K562 (cell line): ENCODE measurements at regions of chr16 and their contacts with region 1.

Region 1: GRCh38 chr16:74563828-74564263 is 43.1 kb downstream of the GLG1 start:
- DNase-seq: peak; percentile 12 to 86 (median 32)
- ATAC-seq: peak; percentile 91
- H3K4me3 ChIP-seq: no peak overlapping the region
- H3K27ac ChIP-seq: peak overlapping the region; percentile 84; the same call in 2 of the 3 replicates
- H3K4me1 ChIP-seq: peaks cover 18 to 29% of the 10 kb centered on the region in 2 experiments
- H3K27me3 ChIP-seq: no peaks in the 10 kb centered on the region
- CTCF ChIP-seq: no peak; a peak in 1 of 6 replicates
- EP300 ChIP-seq: peak; percentile 76
- POLR2A ChIP-seq: no peak
- RAD21 ChIP-seq: no peak; a peak in 1 of 4 replicates

Region 2: DNA sequence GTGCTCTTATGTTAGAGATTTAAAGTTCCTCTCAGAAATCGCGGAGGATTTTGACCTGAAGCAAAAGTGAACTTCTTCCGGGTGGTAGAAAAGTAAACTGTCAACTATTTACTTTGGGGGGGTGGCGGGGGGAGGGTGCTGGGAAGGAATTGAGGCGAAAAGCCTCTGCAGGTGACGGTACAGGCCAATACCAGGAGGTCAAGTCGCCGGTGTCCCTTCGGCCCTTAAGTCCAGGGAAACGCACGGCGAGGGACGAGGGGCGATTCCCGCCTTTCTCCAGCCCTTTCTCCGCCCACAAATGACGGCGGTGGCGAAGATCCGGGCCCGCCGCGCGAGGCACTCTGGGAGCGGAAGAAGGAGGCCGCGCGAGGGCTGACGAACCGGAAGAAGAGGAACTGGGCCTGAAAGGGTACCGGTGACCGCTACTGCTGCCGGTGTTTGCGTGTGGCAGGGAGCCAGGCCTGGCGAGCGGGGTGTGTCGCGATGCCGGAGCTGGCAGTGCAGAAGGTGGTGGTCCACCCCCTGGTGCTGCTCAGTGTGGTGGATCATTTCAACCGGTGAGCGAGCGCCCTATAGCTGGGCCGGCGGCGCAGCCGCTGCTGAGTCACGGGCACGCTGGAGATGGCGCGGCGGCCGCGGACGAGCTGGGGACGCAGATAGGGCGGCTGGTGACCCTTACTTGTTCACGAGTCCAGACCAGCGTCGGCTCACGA is 267.3 kb before region 1 on chr16 and contains the start of gene PSMD7:
- CTCF ChIA-PET with region 1: no interaction called
- POLR2A ChIA-PET with region 1: no interaction called
- in situ Hi-C with region 1: no loop called
- intact Hi-C with region 1: no loop called
- DNase-seq: peak; percentile 87 to 96 (median 89)
- ATAC-seq: peak; percentile 95
- H3K4me3 ChIP-seq: peak within 1 kb of the TSS; percentile 86
- H3K27ac ChIP-seq: peak within 1 kb of the TSS; percentile 92
- H3K4me1 ChIP-seq: peaks cover 7 to 13% of the 10 kb centered on the region in 2 experiments; a peak in 3 of 5 replicates
- H3K27me3 ChIP-seq: no peaks in the 10 kb centered on the region
- CTCF ChIP-seq: no peak
- EP300 ChIP-seq: peak; percentile 15; the same call in 1 of the 2 replicates
- POLR2A ChIP-seq: peak; percentile 97
- RAD21 ChIP-seq: no peak
- polyA plus RNA-seq, gene PSMD7: 100 to 142 TPM

Region 3: DNA sequence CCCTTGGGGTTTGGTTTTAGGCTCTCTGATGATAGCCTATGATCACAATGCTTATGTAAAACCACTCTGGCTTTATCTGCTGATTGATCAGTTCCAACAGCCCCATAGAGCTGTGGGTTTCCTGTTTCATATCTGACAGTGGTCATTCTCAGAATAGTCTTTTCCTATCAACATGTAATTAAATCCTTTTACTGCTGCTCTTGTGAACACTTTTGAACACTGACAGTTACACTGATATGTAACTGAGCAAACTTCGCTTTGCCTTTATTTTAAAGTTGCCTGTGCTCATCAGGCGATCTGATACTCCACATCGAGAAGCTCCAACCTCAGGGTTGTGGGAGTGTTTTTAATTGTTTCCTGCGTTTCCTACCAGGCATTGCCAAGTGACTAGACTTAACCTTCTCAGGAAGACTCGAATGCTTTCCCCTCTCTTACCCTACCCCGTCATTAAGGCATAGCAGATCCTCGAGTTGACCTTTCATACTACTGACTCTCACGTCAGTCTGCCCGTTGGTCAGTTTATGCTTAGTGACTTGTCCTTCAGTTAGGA is 125.3 kb before region 1 on chr16:
- CTCF ChIA-PET with region 1: no interaction called
- POLR2A ChIA-PET with region 1: no interaction called
- in situ Hi-C with region 1: loop called (anchors 5 kb)
- intact Hi-C with region 1: loop called (anchors 2 kb)
- DNase-seq: no peak
- ATAC-seq: no peak
- H3K4me3 ChIP-seq: no peak overlapping the region
- H3K27ac ChIP-seq: no peak overlapping the region
- H3K4me1 ChIP-seq: peaks cover 0 to 8% of the 10 kb centered on the region in 2 experiments; a peak in 3 of 5 replicates
- H3K27me3 ChIP-seq: no peaks in the 10 kb centered on the region
- CTCF ChIP-seq: no peak
- EP300 ChIP-seq: no peak
- POLR2A ChIP-seq: no peak
- RAD21 ChIP-seq: no peak

Region 4: DNA sequence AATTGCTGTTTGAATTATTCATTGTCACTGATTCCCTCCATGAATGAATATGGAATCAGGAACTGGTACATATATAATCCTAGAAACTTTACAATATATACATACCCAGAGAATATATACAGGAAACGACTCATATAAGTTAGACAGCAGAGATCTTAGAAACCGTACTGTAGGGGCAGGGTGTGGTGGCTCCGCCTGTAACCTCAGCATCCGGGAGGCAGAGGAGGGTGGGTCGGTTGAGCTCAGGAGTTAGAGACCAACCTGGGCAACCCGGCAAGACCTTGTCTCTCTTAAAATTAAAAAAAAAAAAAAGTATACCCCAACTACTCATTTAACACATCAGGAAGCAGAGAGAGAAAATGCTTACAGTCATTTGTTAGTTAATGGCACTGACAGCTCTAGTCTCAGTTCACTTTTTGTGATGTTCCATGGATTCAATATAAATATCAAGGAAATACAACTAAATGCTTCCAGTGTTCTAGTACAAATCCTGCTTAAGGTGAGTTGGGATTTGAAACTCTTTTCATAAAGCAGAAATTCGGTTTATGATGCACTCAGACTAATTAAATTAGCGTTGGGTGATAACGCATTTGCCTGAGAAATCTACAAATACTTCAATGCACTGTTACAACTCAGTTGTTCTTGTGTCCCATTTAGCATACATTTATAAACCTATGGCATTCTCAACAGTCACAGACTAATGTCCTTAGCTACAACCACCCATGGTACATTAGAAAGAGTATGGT is 37.5 kb after region 1 on chr16:
- CTCF ChIA-PET with region 1: no interaction called
- POLR2A ChIA-PET with region 1: interaction called, 4 read pairs
- in situ Hi-C with region 1: no loop called
- intact Hi-C with region 1: loop called (anchors 5 kb)
- DNase-seq: peak in 2 of 4 experiments; percentile 39 to 55
- ATAC-seq: peak; percentile 78
- H3K4me3 ChIP-seq: no peak overlapping the region
- H3K27ac ChIP-seq: peak overlapping the region; percentile 4; the same call in 1 of the 3 replicates
- H3K4me1 ChIP-seq: peaks cover 5 to 14% of the 10 kb centered on the region in 2 experiments; a peak in 4 of 5 replicates
- H3K27me3 ChIP-seq: no peaks in the 10 kb centered on the region
- CTCF ChIP-seq: no peak
- EP300 ChIP-seq: no peak
- POLR2A ChIP-seq: no peak
- RAD21 ChIP-seq: no peak

Region 5: GRCh38 chr16:74743668-74744299 is 179.9 kb after region 1 on chr16:
- CTCF ChIA-PET with region 1: no interaction called
- POLR2A ChIA-PET with region 1: no interaction called
- in situ Hi-C with region 1: no loop called
- intact Hi-C with region 1: no loop called
- DNase-seq: peak; percentile 86 to 91 (median 86)
- ATAC-seq: peak; percentile 90
- H3K4me3 ChIP-seq: peak overlapping the region; percentile 9; the same call in 1 of the 2 replicates
- H3K27ac ChIP-seq: no peak overlapping the region
- H3K4me1 ChIP-seq: peaks cover 9 to 26% of the 10 kb centered on the region in 2 experiments; a peak in 4 of 5 replicates
- H3K27me3 ChIP-seq: peaks cover 12 to 42% of the 10 kb centered on the region in 2 experiments; a peak in 4 of 5 replicates
- CTCF ChIP-seq: no peak
- EP300 ChIP-seq: no peak; the same call in 1 of the 2 replicates
- POLR2A ChIP-seq: no peak
- RAD21 ChIP-seq: no peak

Region 6: GRCh38 chr16:74795104-74795503 is 231.3 kb after region 1 on chr16:
- CTCF ChIA-PET with region 1: no interaction called
- POLR2A ChIA-PET with region 1: no interaction called
- in situ Hi-C with region 1: no loop called
- intact Hi-C with region 1: no loop called
- DNase-seq: no peak
- ATAC-seq: no peak
- H3K4me3 ChIP-seq: no peak overlapping the region
- H3K27ac ChIP-seq: no peak overlapping the region
- H3K4me1 ChIP-seq: no peaks in the 10 kb centered on the region
- H3K27me3 ChIP-seq: peaks cover 4% of the 10 kb centered on the region in 2 experiments; a peak in 3 of 5 replicates
- CTCF ChIP-seq: no peak
- EP300 ChIP-seq: no peak
- POLR2A ChIP-seq: no peak
- RAD21 ChIP-seq: no peak

Region 7: GRCh38 chr16:74837056-74837455 is 273.2 kb after region 1 on chr16:
- CTCF ChIA-PET with region 1: no interaction called
- POLR2A ChIA-PET with region 1: no interaction called
- in situ Hi-C with region 1: no loop called
- intact Hi-C with region 1: no loop called
- DNase-seq: no peak
- ATAC-seq: no peak
- H3K4me3 ChIP-seq: no peak overlapping the region
- H3K27ac ChIP-seq: no peak overlapping the region
- H3K4me1 ChIP-seq: peaks cover 0 to 4% of the 10 kb centered on the region in 2 experiments; a peak in 3 of 5 replicates
- H3K27me3 ChIP-seq: no peaks in the 10 kb centered on the region
- CTCF ChIP-seq: no peak
- EP300 ChIP-seq: no peak
- POLR2A ChIP-seq: no peak
- RAD21 ChIP-seq: no peak